Heart right ventricle (tissue), 16 donors: ENCODE measurements at regions of chr7 and their contacts with region 1.

Region 1: GRCh38 chr7:101681170-101682007 is 52.3 kb upstream of the MYL10 start:
- DNase-seq: peak; percentile 62 to 65
- ATAC-seq: peak; percentile 79 to 96 (median 90)
- H3K4me3 ChIP-seq: no peak overlapping the region
- H3K27ac ChIP-seq: peak overlapping the region in 2 of 10 donors; percentile 16 to 53
- H3K4me1 ChIP-seq: peaks cover 0 to 18% (median 14%) of the 10 kb centered on the region in 9 donors
- H3K27me3 ChIP-seq: no peaks in the 10 kb centered on the region
- CTCF ChIP-seq: no peak

Region 2: GRCh38 chr7:101608823-101609703 is 72.3 kb before region 1 on chr7:
- intact Hi-C with region 1: loop called in 1 of 10 experiments (anchors 5 kb)
- DNase-seq: no peak
- ATAC-seq: no peak
- H3K4me3 ChIP-seq: no peak overlapping the region
- H3K27ac ChIP-seq: no peak overlapping the region
- H3K4me1 ChIP-seq: no peaks in the 10 kb centered on the region
- H3K27me3 ChIP-seq: peaks cover 0 to 8% (median 0%) of the 10 kb centered on the region in 7 donors
- CTCF ChIP-seq: no peak